Natural killer cell (primary cell): ENCODE measurements at regions of chr1 and their contacts with region 1.

Region 1: DNA sequence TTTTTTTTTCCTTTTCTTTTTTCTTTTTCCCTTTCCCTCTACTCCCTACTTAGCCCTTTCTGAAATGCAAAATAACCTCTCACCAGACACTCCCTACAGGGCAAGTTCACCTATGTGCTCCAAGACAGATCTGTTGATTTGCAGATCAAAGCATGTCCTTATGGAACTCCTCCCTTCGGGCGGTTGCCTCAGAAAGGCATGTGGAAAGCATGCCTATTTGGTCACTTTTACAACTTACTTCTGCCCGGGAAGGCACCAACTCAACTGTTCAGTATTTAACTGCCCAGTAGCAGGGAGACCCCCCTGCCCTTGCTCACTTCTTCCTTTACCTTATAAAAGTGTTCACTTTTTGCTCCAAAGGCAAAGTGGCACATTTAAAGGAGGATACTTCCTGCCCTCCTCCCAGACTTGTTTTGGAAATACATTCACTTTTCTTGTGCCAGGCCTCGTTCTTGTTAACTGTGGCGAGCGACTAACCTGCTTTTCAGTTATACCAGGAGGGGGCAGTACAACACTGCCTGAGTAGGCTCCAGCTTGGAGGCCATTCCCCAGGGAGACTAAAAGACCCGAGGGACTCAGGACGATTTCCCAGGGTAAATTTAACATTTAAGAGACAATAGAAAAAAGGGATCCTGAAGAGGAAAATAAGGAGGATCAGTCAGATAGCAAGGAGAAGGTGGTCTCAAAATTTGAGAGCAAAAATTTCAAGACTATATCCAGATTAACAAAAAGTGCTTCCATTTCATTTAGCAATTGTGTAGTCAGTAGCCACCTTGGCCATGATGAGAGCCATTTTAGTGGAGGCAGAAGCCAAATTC is 12.3 kb upstream of the SLAMF7 start:
- DNase-seq: peak in 1 of 2 donors; percentile 90
- ATAC-seq: peak; percentile 88 to 94 (median 90)
- H3K4me3 ChIP-seq: no peak overlapping the region
- H3K4me3 Mint-ChIP-seq: no peak overlapping the region
- H3K27ac ChIP-seq: no peak overlapping the region
- H3K27ac Mint-ChIP-seq: no peak overlapping the region
- H3K4me1 ChIP-seq: peaks cover 14% of the 10 kb centered on the region
- H3K4me1 Mint-ChIP-seq: peaks cover 19 to 20% of the 10 kb centered on the region in 2 donors
- H3K27me3 ChIP-seq: no peaks in the 10 kb centered on the region
- H3K27me3 Mint-ChIP-seq: no peaks in the 10 kb centered on the region
- CTCF ChIP-seq: peak; percentile 91

Region 2: DNA sequence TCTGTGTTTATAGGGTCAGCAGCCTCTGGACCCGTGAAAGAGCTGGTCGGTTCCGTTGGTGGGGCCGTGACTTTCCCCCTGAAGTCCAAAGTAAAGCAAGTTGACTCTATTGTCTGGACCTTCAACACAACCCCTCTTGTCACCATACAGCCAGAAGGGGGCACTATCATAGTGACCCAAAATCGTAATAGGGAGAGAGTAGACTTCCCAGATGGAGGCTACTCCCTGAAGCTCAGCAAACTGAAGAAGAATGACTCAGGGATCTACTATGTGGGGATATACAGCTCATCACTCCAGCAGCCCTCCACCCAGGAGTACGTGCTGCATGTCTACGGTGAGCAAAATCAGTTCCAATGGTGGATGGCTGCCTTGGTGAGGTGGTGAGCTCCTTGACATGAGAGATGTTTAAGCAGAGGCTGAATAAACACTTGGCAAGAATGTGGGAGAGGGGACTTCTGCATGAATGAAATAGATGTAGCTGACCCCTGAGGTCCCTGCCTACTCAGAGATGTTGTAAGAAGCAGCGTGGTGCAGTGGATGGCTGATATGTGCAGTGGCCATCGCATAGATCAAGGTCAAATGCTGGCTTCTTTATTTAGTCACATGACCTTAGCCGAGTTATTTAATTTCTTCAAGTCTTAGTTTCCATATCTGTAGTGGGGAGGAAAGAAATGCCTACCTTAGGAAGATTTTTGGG is 21.6 kb after region 1 on chr1:
- intact Hi-C with region 1: loop called (anchors 1 kb)
- DNase-seq: peak in 1 of 2 donors; percentile 34
- ATAC-seq: no peak
- H3K4me3 ChIP-seq: no peak overlapping the region
- H3K4me3 Mint-ChIP-seq: peak overlapping the region; percentile 68
- H3K27ac ChIP-seq: peak overlapping the region; percentile 23
- H3K27ac Mint-ChIP-seq: peak overlapping the region; percentile 88 to 96
- H3K4me1 ChIP-seq: peaks cover 66% of the 10 kb centered on the region
- H3K4me1 Mint-ChIP-seq: peaks cover 98 to 99% of the 10 kb centered on the region in 2 donors
- H3K27me3 ChIP-seq: no peaks in the 10 kb centered on the region
- H3K27me3 Mint-ChIP-seq: no peaks in the 10 kb centered on the region
- CTCF ChIP-seq: no peak

Region 3: DNA sequence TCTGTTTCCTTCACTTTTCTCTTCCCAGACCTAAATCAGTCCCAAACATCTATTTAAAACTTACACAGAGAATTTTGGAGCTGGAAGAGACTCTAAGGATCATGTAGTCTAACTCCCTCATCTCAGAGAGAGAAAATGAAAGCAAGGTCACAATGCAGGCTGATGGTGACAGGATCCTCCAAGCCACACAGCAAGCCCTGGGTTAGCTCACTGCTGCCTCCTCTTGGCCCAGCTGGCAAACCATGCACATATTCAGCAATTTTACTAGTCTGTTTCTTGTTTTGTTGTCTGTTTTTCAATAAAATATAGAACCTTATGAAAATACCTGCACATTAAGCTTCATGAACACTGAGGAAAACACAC is 41.6 kb after region 1 on chr1:
- intact Hi-C with region 1: loop called (anchors 1 kb)
- DNase-seq: peak; percentile 77 to 95
- ATAC-seq: peak; percentile 88 to 98 (median 96)
- H3K4me3 ChIP-seq: peak overlapping the region; percentile 9
- H3K4me3 Mint-ChIP-seq: peak overlapping the region; percentile 97
- H3K27ac ChIP-seq: peak overlapping the region; percentile 83
- H3K27ac Mint-ChIP-seq: peak overlapping the region; percentile 98 to 99
- H3K4me1 ChIP-seq: peaks cover 17% of the 10 kb centered on the region
- H3K4me1 Mint-ChIP-seq: peaks cover 23 to 24% of the 10 kb centered on the region in 2 donors
- H3K27me3 ChIP-seq: no peaks in the 10 kb centered on the region
- H3K27me3 Mint-ChIP-seq: no peaks in the 10 kb centered on the region
- CTCF ChIP-seq: peak; percentile 91

Region 4: GRCh38 chr1:160830321-160831153 is 103.8 kb after region 1 on chr1:
- intact Hi-C with region 1: loop called (anchors 1 kb)
- DNase-seq: peak; percentile 43 to 84
- ATAC-seq: peak; percentile 57 to 75 (median 71)
- H3K4me3 ChIP-seq: no peak overlapping the region
- H3K4me3 Mint-ChIP-seq: no peak overlapping the region
- H3K27ac ChIP-seq: no peak overlapping the region
- H3K27ac Mint-ChIP-seq: peak overlapping the region; percentile 27 to 86
- H3K4me1 ChIP-seq: peaks cover 14% of the 10 kb centered on the region
- H3K4me1 Mint-ChIP-seq: peaks cover 47 to 50% of the 10 kb centered on the region in 2 donors
- H3K27me3 ChIP-seq: no peaks in the 10 kb centered on the region
- H3K27me3 Mint-ChIP-seq: no peaks in the 10 kb centered on the region
- CTCF ChIP-seq: peak; percentile 53

Region 5: DNA sequence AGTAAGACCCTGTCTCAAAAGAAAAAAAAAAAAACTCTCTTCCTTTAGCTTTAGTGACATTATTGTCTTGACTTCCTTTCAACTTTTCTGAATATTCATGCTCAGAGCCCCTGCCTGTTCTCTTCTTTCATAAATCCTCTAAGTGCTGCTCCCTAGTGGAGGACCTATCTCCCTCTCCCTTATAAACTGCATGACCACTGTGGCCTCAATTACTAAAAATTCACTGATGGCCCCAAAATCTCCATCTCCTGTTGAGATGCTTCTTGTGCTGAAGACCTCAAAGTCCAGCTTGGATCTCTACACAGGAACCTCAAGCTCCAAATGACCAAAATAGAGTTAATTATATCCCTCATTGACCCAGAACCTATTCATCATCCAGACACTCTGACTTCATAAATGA is 150.5 kb after region 1 on chr1:
- intact Hi-C with region 1: loop called (anchors 1 kb)
- DNase-seq: peak in 1 of 2 donors; percentile 75
- ATAC-seq: peak; percentile 82 to 97 (median 91)
- H3K4me3 ChIP-seq: no peak overlapping the region
- H3K4me3 Mint-ChIP-seq: no peak overlapping the region
- H3K27ac ChIP-seq: no peak overlapping the region
- H3K27ac Mint-ChIP-seq: peak overlapping the region in 1 of 2 donors; percentile 14
- H3K4me1 ChIP-seq: peaks cover 16% of the 10 kb centered on the region
- H3K4me1 Mint-ChIP-seq: peaks cover 16 to 17% of the 10 kb centered on the region in 2 donors
- H3K27me3 ChIP-seq: no peaks in the 10 kb centered on the region
- H3K27me3 Mint-ChIP-seq: no peaks in the 10 kb centered on the region
- CTCF ChIP-seq: peak; percentile 73

Region 6: GRCh38 chr1:160951443-160952128 is 224.9 kb after region 1 on chr1:
- intact Hi-C with region 1: loop called (anchors 2 kb)
- DNase-seq: peak; percentile 58 to 85
- ATAC-seq: peak; percentile 83 to 84 (median 84)
- H3K4me3 ChIP-seq: no peak overlapping the region
- H3K4me3 Mint-ChIP-seq: no peak overlapping the region
- H3K27ac ChIP-seq: no peak overlapping the region
- H3K27ac Mint-ChIP-seq: no peak overlapping the region
- H3K4me1 ChIP-seq: peaks cover 15% of the 10 kb centered on the region
- H3K4me1 Mint-ChIP-seq: peaks cover 27 to 30% of the 10 kb centered on the region in 2 donors
- H3K27me3 ChIP-seq: no peaks in the 10 kb centered on the region
- H3K27me3 Mint-ChIP-seq: peaks cover 2 to 15% of the 10 kb centered on the region in 2 donors
- CTCF ChIP-seq: peak; percentile 68